Head of caudate nucleus (tissue), 42 donors: ENCODE measurements at regions of chr21 and their contacts with region 1.

Region 1: GRCh38 chr21:42892931-42893755 is at the start of gene NDUFV3:
- DNase-seq: peak; percentile 99 to 100 (median 100)

Region 2: DNA sequence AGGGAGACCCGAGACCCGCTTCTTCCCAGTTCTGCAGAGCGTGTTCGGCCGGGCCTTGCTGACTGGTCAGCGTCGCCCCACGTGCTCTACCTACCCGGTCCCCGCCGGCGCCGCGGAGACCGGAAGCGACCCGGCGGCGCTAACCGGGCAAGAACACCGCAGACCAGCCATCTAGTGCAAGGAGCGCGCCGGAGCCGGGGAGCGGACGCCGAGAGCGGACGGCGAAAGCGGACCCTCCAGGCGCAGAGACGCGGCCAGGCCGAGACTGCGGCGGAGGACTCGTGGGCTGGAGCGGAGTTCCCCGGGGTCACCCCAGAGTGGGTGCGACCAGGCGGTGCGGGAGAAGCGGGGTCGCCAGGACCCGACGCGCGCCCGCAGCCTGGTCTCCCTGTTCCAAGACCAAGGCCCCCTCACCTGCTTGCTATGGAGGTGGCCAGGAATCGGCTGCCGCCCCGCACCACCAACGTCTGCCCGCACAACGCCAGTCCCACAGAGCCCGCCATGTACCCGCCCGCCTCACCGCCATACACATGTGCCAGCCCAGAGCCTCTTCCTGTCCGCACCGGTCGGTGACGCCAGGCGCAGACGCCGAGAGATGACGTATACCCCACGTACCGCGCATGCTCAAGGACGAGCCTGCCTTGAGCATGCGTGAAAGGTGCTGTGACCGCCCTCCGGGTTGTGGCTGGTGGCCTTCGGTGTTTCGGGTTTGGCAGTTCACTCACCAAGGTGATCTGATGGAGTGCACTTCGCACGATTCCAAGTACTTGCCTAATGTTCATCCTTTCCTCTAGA is 14.0 kb before region 1 on chr21 and contains the start of gene WDR4:
- intact Hi-C with region 1: loop called (anchors 1 kb)
- DNase-seq: peak; percentile 87 to 98 (median 93)